ENCODE measurements at regions of chr3 and their contacts with region 1.

Region 1: DNA sequence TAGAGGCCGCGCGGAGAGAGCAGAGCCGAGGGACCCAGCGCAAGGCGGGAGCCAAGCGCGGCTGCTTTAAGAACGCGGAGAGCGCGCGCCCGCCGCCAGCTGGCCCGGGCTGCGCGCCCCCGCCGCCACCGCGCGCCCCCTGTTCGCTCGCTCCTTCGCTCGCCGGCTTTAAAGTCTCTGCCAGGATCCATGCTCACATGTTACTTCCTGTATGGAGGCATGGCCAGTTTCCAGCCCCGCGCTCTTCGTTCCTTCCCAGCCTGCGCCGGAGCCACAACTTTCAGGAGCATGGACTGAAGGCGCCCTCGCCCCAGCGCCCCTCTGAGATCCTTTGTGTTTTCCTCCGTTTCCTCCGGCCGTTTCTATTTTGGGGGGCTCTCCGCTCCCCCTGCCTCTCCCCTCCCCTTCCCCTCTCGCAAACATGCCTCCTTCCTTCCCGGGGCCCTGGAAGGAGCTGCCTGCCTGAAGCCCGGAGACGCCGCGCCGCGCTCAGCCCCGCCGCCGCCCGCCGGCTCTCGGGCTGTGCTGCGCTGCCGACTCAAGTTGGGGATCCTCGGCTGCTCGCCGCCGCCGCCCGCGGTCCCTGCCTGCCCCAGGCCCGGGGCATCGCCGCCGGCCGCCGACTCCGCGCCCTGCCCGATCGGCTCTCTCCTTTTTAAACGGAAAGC is at the start of gene PTPRG:
- DNase-seq: peak; percentile 93 to 97 (median 95)
- ATAC-seq: peak; percentile 73 to 83
- H3K4me3 ChIP-seq: peak within 1 kb of the TSS; percentile 81
- H3K27ac ChIP-seq: peak within 1 kb of the TSS; percentile 96
- H3K4me1 ChIP-seq: no peaks in the 10 kb centered on the region
- H3K27me3 ChIP-seq: no peaks in the 10 kb centered on the region
- total RNA-seq, gene PTPRG: 32.0 to 50.7 (median 34.0) TPM

Region 2: GRCh38 chr3:61414456-61414855 is 147.1 kb before region 1 on chr3:
- intact Hi-C with region 1: no loop called
- DNase-seq: no peak
- ATAC-seq: no peak
- H3K4me3 ChIP-seq: no peak overlapping the region
- H3K27ac ChIP-seq: no peak overlapping the region
- H3K4me1 ChIP-seq: no peaks in the 10 kb centered on the region
- H3K27me3 ChIP-seq: no peaks in the 10 kb centered on the region

Region 3: GRCh38 chr3:61637088-61638051 is 75.9 kb after region 1 on chr3:
- intact Hi-C with region 1: loop called in 1 of 4 experiments (anchors 10 kb)
- DNase-seq: peak in 2 of 3 donors; percentile 59 to 70
- ATAC-seq: peak; percentile 78 to 86
- H3K4me3 ChIP-seq: peak overlapping the region; percentile 21
- H3K27ac ChIP-seq: peak overlapping the region; percentile 78
- H3K4me1 ChIP-seq: peaks cover 6% of the 10 kb centered on the region
- H3K27me3 ChIP-seq: no peaks in the 10 kb centered on the region

Region 4: GRCh38 chr3:61725851-61726333 is 164.4 kb after region 1 on chr3:
- intact Hi-C with region 1: loop called in 1 of 4 experiments (anchors 10 kb)
- DNase-seq: no peak
- ATAC-seq: peak; percentile 64 to 85
- H3K4me3 ChIP-seq: no peak overlapping the region
- H3K27ac ChIP-seq: peak overlapping the region; percentile 75
- H3K4me1 ChIP-seq: peaks cover 11% of the 10 kb centered on the region
- H3K27me3 ChIP-seq: no peaks in the 10 kb centered on the region

Region 5: GRCh38 chr3:61796098-61796680 is 234.7 kb after region 1 on chr3:
- intact Hi-C with region 1: loop called in 1 of 4 experiments (anchors 10 kb)
- DNase-seq: no peak
- ATAC-seq: peak in 1 of 2 donors; percentile 12
- H3K4me3 ChIP-seq: no peak overlapping the region
- H3K27ac ChIP-seq: no peak overlapping the region
- H3K4me1 ChIP-seq: peaks cover 6% of the 10 kb centered on the region
- H3K27me3 ChIP-seq: no peaks in the 10 kb centered on the region

Region 6: DNA sequence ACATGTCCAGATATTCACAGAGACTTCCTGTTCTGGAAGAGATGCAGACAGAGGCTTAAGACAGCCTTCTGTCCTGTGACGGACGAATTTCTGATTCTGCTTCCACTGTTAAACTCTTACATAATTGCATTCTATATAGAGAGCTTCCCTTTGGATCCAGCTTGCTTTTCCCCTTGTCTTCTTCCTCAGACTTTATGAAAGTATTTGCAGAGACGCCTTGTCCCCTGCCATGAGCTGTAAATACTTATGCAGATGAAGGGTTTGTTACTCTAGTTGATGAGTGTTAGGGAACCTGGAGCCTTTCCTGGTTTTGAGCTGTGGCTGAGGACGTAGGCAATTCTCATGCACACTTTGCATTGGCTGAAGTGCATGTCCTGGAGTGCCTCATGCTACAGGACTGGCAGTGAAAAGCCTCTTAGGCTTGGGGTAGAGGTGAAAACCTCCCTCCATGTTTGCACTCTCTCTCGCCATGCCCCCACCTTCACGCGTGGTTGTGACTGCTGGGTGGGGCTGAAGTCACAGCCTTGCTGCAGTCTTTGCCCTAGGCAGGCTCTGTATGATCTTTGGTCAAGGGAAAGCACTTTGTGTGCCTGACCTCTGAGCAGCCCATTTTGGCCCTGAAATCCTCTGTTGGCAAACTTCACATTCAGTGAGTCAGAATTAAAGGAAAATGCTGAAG is 286.4 kb after region 1 on chr3:
- intact Hi-C with region 1: loop called in 3 of 4 experiments (anchors 2 to 10 kb)
- DNase-seq: peak; percentile 75 to 89 (median 79)
- ATAC-seq: peak; percentile 96
- H3K4me3 ChIP-seq: no peak overlapping the region
- H3K27ac ChIP-seq: peak overlapping the region; percentile 87
- H3K4me1 ChIP-seq: peaks cover 10% of the 10 kb centered on the region
- H3K27me3 ChIP-seq: no peaks in the 10 kb centered on the region

Region 7: GRCh38 chr3:62188681-62189383 is 627.3 kb after region 1 on chr3:
- intact Hi-C with region 1: loop called in 3 of 4 experiments (anchors 5 kb)
- DNase-seq: peak; percentile 75 to 90 (median 86)
- ATAC-seq: peak; percentile 67 to 73
- H3K4me3 ChIP-seq: no peak overlapping the region
- H3K27ac ChIP-seq: no peak overlapping the region
- H3K4me1 ChIP-seq: peaks cover 7% of the 10 kb centered on the region
- H3K27me3 ChIP-seq: no peaks in the 10 kb centered on the region

Measured in right cardiac atrium (tissue), 5 donors.